ENCODE measurements at regions of chrX and their contacts with region 1.

Region 1: GRCh38 chrX:49878834-49879659 is at the start of gene USP27X:
- DNase-seq: peak; percentile 63 to 93 (median 76)
- ATAC-seq: peak; percentile 88
- H3K4me3 ChIP-seq: peak within 1 kb of the TSS; percentile 64
- H3K4me3 Mint-ChIP-seq: peak within 1 kb of the TSS; percentile 89
- H3K27ac ChIP-seq: peak within 1 kb of the TSS; percentile 46 to 62
- H3K27ac Mint-ChIP-seq: peak within 1 kb of the TSS; percentile 89
- H3K4me1 ChIP-seq: peaks cover 32% of the 10 kb centered on the region
- H3K4me1 Mint-ChIP-seq: peaks cover 30% of the 10 kb centered on the region
- H3K27me3 ChIP-seq: no peaks in the 10 kb centered on the region
- H3K27me3 Mint-ChIP-seq: no peaks in the 10 kb centered on the region
- CTCF ChIP-seq: peak; percentile 32
- total RNA-seq, gene USP27X: 2.7 to 3.2 TPM

Region 2: GRCh38 chrX:49221868-49222267 is 657.2 kb before region 1 on chrX:
- CTCF ChIA-PET with region 1: no interaction called
- POLR2A ChIA-PET with region 1: no interaction called
- intact Hi-C with region 1: no loop called
- DNase-seq: no peak
- ATAC-seq: no peak
- H3K4me3 ChIP-seq: no peak overlapping the region
- H3K4me3 Mint-ChIP-seq: no peak overlapping the region
- H3K27ac ChIP-seq: no peak overlapping the region
- H3K27ac Mint-ChIP-seq: no peak overlapping the region
- H3K4me1 ChIP-seq: no peaks in the 10 kb centered on the region
- H3K4me1 Mint-ChIP-seq: no peaks in the 10 kb centered on the region
- H3K27me3 ChIP-seq: no peaks in the 10 kb centered on the region
- H3K27me3 Mint-ChIP-seq: no peaks in the 10 kb centered on the region
- CTCF ChIP-seq: no peak

Region 3: GRCh38 chrX:49761481-49761880 is 117.6 kb before region 1 on chrX:
- CTCF ChIA-PET with region 1: no interaction called
- POLR2A ChIA-PET with region 1: interaction called, 3 read pairs
- intact Hi-C with region 1: loop called (anchors 2 kb)
- DNase-seq: peak in 4 of 14 experiments; percentile 0 to 36 (median 28)
- ATAC-seq: peak; percentile 63
- H3K4me3 ChIP-seq: no peak overlapping the region
- H3K4me3 Mint-ChIP-seq: no peak overlapping the region
- H3K27ac ChIP-seq: no peak overlapping the region
- H3K27ac Mint-ChIP-seq: no peak overlapping the region
- H3K4me1 ChIP-seq: no peaks in the 10 kb centered on the region
- H3K4me1 Mint-ChIP-seq: no peaks in the 10 kb centered on the region
- H3K27me3 ChIP-seq: no peaks in the 10 kb centered on the region
- H3K27me3 Mint-ChIP-seq: peaks cover 8% of the 10 kb centered on the region
- CTCF ChIP-seq: peak; percentile 48

Region 4: GRCh38 chrX:49958727-49959485 is 79.9 kb after region 1 on chrX:
- CTCF ChIA-PET with region 1: no interaction called
- POLR2A ChIA-PET with region 1: no interaction called
- intact Hi-C with region 1: no loop called
- DNase-seq: no peak
- ATAC-seq: no peak
- H3K4me3 ChIP-seq: no peak overlapping the region
- H3K4me3 Mint-ChIP-seq: no peak overlapping the region
- H3K27ac ChIP-seq: no peak overlapping the region
- H3K27ac Mint-ChIP-seq: no peak overlapping the region
- H3K4me1 ChIP-seq: no peaks in the 10 kb centered on the region
- H3K4me1 Mint-ChIP-seq: no peaks in the 10 kb centered on the region
- H3K27me3 ChIP-seq: no peaks in the 10 kb centered on the region
- H3K27me3 Mint-ChIP-seq: no peaks in the 10 kb centered on the region
- CTCF ChIP-seq: no peak